AG04449 (cell line): ENCODE measurements at regions of chr7 and their contacts with region 1.

Region 1: DNA sequence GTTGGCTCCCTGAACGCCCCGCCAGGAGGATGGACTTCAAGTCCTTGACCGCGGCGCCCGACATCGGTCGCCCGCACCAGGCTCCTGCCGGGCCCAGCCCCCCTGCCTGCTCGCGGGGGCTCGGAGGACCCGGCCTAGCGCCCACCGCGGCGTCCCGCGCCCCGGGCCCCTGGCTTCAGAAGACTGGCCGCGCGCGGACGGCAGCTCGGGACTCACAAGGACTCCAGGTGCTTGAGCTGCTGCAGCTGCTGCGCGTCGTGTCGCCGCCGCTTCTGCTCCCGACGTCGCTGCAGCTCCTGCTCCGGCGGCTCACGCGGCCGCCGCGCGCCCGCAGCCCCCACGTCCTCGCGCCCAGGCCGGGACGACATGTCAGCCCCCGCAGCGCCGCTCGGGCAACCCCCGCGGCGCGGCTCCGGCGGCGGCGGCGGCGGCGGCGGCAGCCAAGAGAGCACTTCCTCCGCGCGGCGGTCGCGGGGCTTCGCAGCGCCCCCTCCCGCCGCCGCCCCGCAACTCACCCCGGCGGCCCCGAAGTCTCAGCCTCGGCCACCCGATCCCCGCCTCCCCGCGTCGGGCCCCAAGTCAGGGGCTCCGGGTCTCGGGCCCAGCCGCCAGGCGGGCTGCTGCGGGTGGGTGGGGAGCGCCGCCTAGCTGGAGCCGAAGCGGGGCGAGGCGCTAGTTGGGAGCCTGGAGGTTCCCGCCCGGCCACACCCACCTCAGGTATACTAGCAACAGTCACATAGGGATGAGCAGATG is at the start of gene RP9:
- DNase-seq: no peak
- H3K4me3 ChIP-seq: peak within 1 kb of the TSS; percentile 75
- CTCF ChIP-seq: peak; percentile 64

Region 2: GRCh38 chr7:32761451-32762205 is 347.6 kb before region 1 on chr7:
- CTCF ChIA-PET with region 1: interaction called, 85 read pairs
- POLR2A ChIA-PET with region 1: no interaction called
- DNase-seq: no peak
- H3K4me3 ChIP-seq: peak overlapping the region; percentile 36
- CTCF ChIP-seq: no peak

Region 3: DNA sequence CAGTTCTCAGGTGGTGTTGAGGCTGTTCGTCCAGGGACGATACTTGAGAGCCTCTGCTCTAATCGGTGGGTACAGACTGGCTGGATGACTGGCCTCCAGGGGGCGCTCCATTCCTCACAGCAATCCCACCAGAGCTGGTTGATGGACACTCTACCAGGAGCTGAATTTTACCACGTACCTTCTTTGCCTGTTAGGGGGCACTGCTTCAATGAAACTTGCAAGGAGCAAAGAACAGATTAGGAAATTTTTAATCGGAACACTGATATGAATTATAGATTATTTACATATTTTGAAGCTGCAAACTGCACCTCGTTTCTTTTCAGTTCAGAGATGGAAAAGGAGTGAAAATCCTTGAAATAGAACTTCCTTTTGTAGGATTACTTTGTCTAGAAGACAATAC is 262.5 kb before region 1 on chr7:
- CTCF ChIA-PET with region 1: interaction called, 53 read pairs
- POLR2A ChIA-PET with region 1: no interaction called
- DNase-seq: no peak
- H3K4me3 ChIP-seq: no peak overlapping the region
- CTCF ChIP-seq: peak; percentile 75

Region 4: DNA sequence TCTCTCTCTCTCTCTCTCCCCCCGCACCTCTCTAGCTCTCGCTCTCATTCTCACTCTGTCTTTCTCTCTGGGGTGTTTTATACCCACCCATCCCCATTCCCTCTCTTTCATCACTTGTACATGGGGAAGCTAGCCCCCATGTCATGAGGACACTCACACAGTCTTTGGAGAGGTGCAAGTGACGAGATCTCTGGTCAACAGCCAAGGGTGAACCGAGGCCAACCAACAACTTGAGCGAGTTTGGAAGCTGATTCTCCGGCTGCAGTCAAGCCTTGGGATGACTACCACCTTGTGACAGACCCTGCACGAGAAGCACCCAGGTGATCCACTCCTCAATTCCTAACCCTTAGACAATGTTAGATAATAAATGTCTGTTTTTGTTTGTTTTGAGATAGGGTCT is 207.6 kb before region 1 on chr7:
- CTCF ChIA-PET with region 1: no interaction called
- POLR2A ChIA-PET with region 1: no interaction called
- DNase-seq: no peak
- H3K4me3 ChIP-seq: no peak overlapping the region
- CTCF ChIP-seq: no peak

Region 5: DNA sequence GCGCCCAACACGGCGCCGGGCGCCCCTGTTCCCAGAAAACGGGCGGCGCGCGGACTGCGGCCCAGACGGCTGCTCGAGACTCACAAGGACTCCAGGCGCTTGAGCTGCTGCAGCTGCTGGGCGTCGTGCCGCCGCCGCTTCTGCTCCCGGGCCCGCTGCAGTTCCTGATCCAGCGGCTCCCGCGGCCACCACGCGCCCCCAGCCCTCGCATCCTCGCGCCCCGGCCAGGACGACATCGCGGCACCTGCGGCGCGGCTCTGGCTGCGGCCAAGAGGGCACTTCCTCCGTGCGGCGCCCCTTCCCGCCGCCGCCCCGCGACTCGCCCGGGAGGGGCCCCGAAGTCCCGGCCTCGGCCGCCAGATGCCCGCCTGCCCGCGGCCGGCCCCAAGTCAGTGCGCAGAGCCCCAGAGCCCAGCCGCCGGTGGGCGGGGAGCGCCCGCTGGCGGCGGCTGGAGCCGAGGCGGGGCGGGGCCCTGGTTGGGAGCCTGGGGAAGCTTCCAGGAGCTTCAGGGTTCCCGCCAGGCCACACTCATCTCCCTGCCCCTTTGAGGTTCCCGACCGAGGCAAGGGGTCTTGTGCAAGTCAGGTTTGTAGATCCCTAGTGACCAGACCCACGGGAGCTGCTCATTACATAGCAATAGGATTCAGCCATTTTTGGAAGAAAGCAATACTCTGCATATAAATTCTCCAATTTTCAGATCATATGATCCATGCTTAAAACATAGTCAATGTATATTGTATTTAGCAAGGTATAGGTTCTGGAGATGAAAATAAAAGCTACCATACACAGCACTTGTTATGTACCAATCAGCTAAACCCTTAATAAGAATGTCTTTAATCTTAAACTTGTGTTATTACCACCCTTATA is 166.2 kb before region 1 on chr7:
- CTCF ChIA-PET with region 1: interaction called, 18 read pairs
- POLR2A ChIA-PET with region 1: no interaction called
- DNase-seq: no peak
- H3K4me3 ChIP-seq: peak overlapping the region; percentile 78
- CTCF ChIP-seq: peak; percentile 69

Region 6: DNA sequence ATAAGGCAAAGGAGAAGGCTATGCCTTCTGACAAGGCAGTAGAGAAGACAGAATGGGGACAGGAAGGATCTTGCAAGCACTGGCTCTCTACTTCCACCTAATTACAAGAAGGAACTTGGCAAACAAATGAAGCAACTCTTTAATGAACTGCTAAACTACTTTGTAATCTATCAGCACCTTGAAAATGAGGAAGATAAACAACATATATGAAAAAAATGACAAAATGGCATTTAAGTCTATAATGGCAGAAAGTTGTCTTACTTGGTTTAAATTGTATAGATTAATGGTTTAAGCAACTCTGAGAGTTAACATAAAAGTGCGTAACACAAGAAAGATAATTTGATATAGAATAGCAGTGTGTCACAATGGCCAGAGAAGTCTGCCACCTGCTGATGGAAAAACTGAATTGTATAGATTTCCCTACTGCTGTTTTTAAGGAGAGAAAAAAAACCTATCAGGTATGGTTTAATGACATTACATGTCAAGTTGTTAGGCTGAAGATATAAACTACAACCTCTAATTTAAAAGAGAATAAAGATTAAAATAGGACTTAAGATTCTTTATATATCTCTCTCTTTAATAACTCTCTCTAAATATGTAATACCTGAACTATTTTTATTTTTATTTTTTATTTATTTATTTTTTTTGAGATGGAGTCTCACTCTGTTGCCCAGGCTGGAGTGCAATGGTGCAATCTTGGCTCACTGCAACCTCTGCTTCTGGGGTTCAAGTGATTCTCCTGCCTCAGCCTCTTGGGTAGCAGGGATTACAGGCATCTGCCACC is 58.5 kb before region 1 on chr7:
- CTCF ChIA-PET with region 1: interaction called, 13 read pairs
- POLR2A ChIA-PET with region 1: no interaction called
- DNase-seq: no peak
- H3K4me3 ChIP-seq: no peak overlapping the region
- CTCF ChIP-seq: peak; percentile 36

Region 7: GRCh38 chr7:33072471-33072870 is 36.7 kb before region 1 on chr7:
- CTCF ChIA-PET with region 1: interaction called, 18 read pairs
- POLR2A ChIA-PET with region 1: no interaction called
- DNase-seq: peak; percentile 41
- H3K4me3 ChIP-seq: no peak overlapping the region
- CTCF ChIP-seq: no peak

Region 8: DNA sequence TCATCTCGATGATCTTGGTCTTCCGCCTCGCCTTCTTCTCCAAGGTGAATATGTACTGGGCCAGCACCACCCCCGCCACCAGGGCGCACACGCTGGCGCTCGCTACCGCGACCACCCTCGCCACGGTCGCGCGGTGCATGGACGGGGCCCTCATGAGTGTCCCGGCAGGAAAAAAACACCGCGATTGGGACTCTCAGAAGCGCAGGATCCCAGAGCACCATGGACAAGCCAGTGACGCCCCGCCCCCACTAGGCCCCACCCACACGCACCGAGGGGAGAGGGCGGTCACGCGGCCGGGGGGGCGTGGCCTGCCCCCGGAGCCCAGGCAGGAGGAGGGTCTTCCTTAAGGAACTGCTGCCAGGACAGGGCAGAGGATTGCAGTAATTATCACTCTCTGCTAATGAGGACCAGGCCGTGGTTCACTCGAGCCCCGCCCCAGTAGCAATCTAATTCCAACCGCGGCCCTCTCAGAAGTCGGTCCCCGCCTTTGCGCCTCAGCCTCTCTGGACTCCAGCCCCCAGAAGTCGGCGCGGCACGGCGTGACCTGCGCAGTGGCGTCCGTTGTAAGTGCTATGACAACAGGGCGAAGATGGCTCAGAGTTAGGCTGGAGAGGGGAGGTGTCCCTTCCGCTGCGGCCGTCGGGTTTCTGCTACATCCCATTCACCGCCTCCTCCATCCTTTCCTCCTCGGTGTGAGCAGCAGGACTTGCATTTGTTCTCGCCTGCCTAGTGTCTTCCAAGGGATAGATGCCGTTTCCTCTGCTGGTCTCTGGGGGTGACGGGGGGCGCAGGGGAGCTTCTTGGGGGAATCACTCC is 20.0 kb after region 1 on chr7 and contains the start of gene BBS9:
- CTCF ChIA-PET with region 1: interaction called, 53 read pairs
- POLR2A ChIA-PET with region 1: no interaction called
- DNase-seq: peak; percentile 46
- H3K4me3 ChIP-seq: peak within 1 kb of the TSS; percentile 87
- CTCF ChIP-seq: no peak

Region 9: DNA sequence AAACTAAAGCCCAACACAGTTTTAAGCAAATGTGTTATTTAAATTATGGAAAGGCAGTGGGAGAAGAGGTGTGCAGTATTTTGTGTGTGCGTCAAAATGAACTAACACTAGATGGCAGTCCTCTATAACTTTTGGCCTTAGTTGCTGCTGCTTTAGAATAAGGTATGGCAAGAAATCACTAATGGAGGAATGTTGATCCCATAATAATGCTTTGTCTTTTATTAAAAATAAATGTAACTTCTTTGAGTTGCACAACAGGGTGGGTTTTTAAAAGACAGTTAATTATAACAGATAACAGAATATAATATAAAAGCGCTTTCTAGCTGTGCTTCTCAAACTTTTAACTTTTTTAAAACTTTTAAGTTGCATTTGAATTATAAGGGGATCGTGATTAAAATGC is 76.6 kb after region 1 on chr7:
- CTCF ChIA-PET with region 1: no interaction called
- POLR2A ChIA-PET with region 1: no interaction called
- DNase-seq: no peak
- H3K4me3 ChIP-seq: no peak overlapping the region
- CTCF ChIP-seq: peak; percentile 54